ENCODE measurements at regions of chr1 and their contacts with region 1.

Region 1: DNA sequence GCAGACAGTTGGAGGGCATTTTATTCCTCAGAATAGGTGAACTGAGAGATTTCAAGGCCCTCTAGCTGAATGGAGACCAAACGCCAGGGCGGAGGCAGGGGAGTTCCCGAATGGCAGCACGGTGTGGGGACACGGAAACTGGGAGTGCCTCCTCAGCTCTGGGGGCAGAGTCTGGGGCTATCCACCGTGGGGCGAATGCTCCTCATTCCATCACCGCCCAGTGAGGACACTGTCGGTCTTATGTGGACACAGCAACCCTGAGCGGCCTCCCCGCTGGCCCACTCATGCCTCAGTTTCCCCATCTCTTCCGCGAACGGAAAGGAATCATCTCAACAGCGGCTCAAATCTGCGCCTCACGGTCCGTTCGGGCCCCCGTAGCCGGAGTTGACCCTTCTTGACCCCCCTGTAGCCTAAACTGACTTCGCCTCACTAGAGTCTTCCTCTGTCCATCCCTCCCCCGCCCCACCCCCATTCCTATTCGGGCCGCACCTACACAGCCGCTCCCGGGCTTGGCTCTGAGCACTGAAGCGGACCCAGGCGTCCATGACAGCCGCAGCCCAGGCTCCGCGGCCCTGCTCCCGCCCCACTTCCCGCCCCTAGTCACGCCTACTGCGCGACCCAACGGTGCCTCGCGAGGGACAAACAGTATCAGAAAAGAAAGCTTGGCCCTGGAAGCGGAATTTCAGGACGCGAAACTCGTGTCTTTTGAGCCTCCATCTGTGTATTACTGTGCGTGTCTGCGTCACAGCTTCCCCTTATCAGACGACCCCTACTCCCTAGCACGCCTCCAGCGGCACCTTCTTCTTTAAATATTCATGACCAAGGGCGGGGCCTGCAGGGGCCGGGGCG is at the start of gene PEX11B:
- DNase-seq: peak; percentile 90
- H3K4me3 ChIP-seq: peak within 1 kb of the TSS; percentile 94
- H3K27ac ChIP-seq: peak within 1 kb of the TSS; percentile 96
- H3K4me1 ChIP-seq: peaks cover 36% of the 10 kb centered on the region
- H3K27me3 ChIP-seq: no peaks in the 10 kb centered on the region
- CTCF ChIP-seq: peak; percentile 20
- total RNA-seq, gene PEX11B: 24.4 TPM

Region 2: GRCh38 chr1:145785547-145785946 is 132.8 kb before region 1 on chr1:
- intact Hi-C with region 1: no loop called
- DNase-seq: no peak
- H3K4me3 ChIP-seq: no peak overlapping the region
- H3K27ac ChIP-seq: peak overlapping the region; percentile 72
- H3K4me1 ChIP-seq: peaks cover 56% of the 10 kb centered on the region
- H3K27me3 ChIP-seq: no peaks in the 10 kb centered on the region
- CTCF ChIP-seq: no peak

Region 3: DNA sequence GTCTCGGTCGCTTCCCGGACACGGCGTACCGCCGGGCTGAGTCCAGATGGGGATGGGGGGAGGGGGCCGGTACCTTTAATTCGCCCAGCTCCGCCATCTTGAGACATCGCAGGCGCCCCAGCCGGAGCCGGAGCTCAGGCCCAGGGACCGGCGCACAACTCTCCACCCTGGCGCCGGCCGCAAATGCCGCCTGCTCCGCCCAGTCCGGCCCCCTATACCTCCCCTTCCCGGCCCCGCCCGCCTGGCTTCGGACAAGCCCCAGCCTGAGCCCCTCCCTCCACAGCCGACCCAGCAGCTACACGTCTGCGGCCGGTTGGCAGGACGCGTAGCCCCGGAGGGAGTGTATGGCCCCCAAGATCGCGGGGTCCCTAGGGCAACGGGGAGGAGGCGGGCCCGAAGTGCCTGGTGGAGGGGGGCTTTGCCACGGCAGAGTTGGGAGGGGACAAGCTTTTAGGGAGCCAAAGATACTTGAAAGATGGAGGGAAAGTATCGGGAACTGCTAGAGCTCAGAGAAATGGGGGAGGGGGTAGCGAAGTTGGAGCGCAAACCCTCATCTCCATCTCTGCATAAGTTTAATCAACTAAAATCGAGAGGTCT is 59.4 kb before region 1 on chr1 and contains the start of gene PIAS3:
- intact Hi-C with region 1: loop called (anchors 10 kb)
- DNase-seq: peak; percentile 97
- H3K4me3 ChIP-seq: peak within 1 kb of the TSS; percentile 89
- H3K27ac ChIP-seq: peak within 1 kb of the TSS; percentile 94
- H3K4me1 ChIP-seq: peaks cover 32% of the 10 kb centered on the region
- H3K27me3 ChIP-seq: no peaks in the 10 kb centered on the region
- CTCF ChIP-seq: no peak
- total RNA-seq, gene PIAS3: 14.6 TPM

Region 4: GRCh38 chr1:145978854-145979759 is 60.7 kb after region 1 on chr1:
- intact Hi-C with region 1: loop called (anchors 10 kb)
- DNase-seq: peak; percentile 92
- H3K4me3 ChIP-seq: peak overlapping the region; percentile 58
- H3K27ac ChIP-seq: peak overlapping the region; percentile 99
- H3K4me1 ChIP-seq: peaks cover 70% of the 10 kb centered on the region
- H3K27me3 ChIP-seq: no peaks in the 10 kb centered on the region
- CTCF ChIP-seq: peak; percentile 43

Region 5: DNA sequence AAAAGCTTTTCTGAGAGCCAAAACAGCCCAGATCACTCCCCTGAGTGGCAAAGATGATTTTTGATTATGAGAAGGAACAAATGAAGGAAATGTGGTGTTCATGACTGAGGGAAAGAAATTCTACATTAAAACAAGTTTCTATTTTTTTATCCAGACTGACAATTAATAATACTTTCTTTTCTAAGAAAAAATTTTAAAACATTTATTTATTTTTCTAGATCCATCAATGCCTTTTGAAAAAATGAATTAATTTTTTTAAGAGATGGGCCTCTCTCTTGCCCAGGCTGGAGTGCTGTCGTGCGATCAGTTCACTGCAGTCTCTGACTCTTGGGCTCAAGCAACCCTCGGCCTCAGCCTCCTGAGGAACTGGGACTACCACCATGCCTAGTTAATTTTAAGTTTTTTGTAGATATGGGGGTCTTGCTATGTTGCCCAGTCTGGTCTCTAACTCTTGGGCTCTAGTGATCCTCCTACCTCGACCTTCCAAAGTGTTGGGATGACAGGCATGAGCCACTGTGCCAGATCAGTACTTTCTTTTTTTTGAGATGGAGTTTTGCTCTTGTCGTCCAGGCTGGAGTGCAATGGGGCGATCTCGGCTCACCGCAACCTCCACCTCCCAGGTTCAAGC is 89.3 kb after region 1 on chr1:
- intact Hi-C with region 1: no loop called
- DNase-seq: no peak
- H3K4me3 ChIP-seq: no peak overlapping the region
- H3K27ac ChIP-seq: peak overlapping the region; percentile 88
- H3K4me1 ChIP-seq: peaks cover 51% of the 10 kb centered on the region
- H3K27me3 ChIP-seq: no peaks in the 10 kb centered on the region
- CTCF ChIP-seq: no peak

Region 6: GRCh38 chr1:146019231-146020057 is 101.1 kb after region 1 on chr1:
- intact Hi-C with region 1: no loop called
- DNase-seq: no peak
- H3K4me3 ChIP-seq: peak overlapping the region; percentile 61
- H3K27ac ChIP-seq: peak overlapping the region; percentile 85
- H3K4me1 ChIP-seq: peaks cover 22% of the 10 kb centered on the region
- H3K27me3 ChIP-seq: peaks cover 28% of the 10 kb centered on the region
- CTCF ChIP-seq: no peak